Activated naive CD4-positive, alpha-beta T cell treated with anti-CD3 and anti-CD28 coated beads for 36 hours (primary cell): ENCODE measurements at regions of chr22 and their contacts with region 1.

Region 1: DNA sequence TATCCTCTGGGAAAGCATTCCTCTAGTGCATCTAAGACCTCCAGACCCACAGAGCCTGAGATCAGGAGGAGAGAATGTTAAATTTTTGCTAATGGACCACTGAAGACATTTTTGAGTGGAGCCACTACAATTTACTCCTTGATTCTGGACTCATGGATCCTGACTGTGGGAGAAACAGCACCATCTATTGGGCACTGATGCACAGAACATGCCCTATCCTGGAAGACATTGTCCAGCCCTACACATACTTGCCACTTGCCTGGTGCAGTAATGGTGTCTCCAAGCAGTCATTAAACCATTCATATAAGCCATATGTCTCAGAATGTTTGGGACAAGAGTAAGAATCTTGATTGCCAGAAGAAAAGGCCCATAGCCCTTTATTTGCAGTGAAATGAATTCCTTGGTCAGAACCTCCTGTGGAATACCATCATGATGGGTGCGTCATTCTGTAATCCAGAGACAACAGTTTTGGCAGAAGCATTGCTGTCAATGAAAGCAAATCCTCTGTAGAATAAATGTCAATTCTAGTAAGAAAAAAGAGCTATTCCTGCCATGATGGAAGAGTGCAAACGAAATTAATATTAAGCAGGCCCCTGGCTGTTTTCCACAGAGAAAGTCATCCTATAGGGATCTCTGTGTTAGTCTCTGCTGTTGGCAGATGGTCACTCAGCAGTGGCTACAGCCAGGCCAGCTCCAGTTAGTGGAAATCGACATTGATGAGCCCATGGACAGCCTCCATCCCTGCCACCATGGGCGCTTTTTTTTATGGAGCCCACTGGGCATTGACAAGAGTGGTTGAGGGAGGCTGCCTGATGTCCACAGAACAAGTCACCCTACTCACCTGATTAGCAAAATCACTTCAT is 43.5 kb downstream of the GGTLC2 start:
- DNase-seq: peak; percentile 58
- H3K4me3 Mint-ChIP-seq: no peak overlapping the region
- H3K27ac Mint-ChIP-seq: no peak overlapping the region
- H3K4me1 Mint-ChIP-seq: no peaks in the 10 kb centered on the region
- H3K27me3 Mint-ChIP-seq: no peaks in the 10 kb centered on the region

Region 2: GRCh38 chr22:22587577-22588188 is 100.2 kb before region 1 on chr22:
- CTCF ChIA-PET with region 1: interaction called, 15 read pairs
- intact Hi-C with region 1: loop called (anchors 1 kb)
- DNase-seq: no peak
- H3K4me3 Mint-ChIP-seq: no peak overlapping the region
- H3K27ac Mint-ChIP-seq: no peak overlapping the region
- H3K4me1 Mint-ChIP-seq: no peaks in the 10 kb centered on the region
- H3K27me3 Mint-ChIP-seq: peaks cover 4% of the 10 kb centered on the region

Region 3: DNA sequence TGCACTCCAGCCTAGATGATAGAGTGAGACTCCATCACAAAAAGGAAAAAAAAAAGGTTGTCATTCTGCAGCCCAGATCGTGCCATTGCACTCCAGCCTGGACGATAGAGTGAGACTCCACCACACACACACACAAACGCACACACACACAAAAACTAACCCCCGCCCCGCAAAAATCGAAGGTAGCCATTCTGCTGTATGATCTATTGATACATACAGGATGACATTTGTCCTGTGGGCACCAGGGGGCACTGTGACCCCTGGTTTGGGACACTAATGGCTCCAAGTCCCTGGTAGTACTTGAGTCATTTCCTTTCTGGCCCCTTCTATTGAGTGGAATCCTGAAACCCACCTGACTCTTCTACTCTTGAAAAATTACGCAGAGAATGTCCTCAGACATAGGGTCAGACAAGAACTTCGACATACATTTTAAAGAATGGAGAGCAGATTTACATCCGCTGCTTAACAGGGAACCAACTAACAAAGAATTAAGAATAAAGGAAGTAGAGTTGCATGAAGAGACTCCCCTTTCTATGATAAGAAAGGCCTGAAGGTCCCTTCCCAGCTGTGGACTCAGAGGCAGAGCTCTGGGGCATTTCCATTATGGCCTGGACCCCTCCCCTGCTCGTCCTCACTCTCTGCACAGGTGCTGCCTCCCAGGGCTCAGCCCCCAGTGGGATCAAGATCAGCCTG is 93.8 kb before region 1 on chr22:
- CTCF ChIA-PET with region 1: interaction called, 7 read pairs
- intact Hi-C with region 1: loop called (anchors 1 kb)
- DNase-seq: peak; percentile 72
- H3K4me3 Mint-ChIP-seq: no peak overlapping the region
- H3K27ac Mint-ChIP-seq: no peak overlapping the region
- H3K4me1 Mint-ChIP-seq: peaks cover 4% of the 10 kb centered on the region
- H3K27me3 Mint-ChIP-seq: no peaks in the 10 kb centered on the region

Region 4: GRCh38 chr22:22666307-22667091 is 21.4 kb before region 1 on chr22:
- CTCF ChIA-PET with region 1: interaction called, 10 read pairs
- intact Hi-C with region 1: loop called (anchors 2 kb)
- DNase-seq: peak; percentile 33
- H3K4me3 Mint-ChIP-seq: no peak overlapping the region
- H3K27ac Mint-ChIP-seq: no peak overlapping the region
- H3K4me1 Mint-ChIP-seq: no peaks in the 10 kb centered on the region
- H3K27me3 Mint-ChIP-seq: no peaks in the 10 kb centered on the region